ENCODE measurements at regions of chr3 and their contacts with region 1.

Region 1: DNA sequence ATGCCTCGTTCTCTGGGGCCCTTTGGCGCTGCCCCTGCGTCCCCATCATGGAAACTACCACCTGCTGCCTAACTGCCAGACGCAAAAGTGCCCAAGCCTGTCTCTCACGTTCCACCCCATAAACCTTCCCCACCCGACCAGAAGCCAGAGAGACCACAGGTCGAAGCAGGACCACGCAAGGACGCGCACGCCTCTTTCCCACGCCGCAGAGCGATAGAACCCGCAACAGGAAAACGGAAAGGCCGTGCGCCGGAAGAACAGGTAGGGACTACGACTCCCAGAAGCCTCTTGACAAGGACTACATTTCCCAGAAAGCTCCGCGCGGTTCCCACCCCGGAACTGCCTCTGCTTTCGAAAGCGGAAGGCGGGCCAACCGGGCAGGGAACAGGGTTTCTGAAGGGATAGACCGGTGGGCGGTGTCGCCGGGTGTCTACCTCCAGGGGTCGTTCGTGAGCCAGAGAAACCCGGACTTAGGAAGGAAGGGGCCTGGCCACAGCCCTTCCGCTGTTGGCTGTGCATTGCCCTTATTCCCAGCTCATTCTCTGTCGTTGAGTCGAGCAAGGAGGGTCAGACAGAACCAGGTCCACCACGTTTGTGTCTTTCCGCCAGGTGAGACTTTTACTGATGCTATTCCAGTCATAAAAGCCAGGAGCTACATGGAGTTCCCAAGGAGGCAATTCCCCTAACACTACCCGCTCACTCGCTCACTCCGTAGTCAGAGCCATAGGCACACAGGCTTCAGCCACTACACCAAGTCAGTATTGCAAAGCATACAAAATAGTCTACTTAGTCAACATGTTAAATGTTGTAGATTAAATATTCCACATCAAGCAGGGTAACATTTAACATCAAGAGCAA is 56.6 kb upstream of the ZBTB38 start:
- DNase-seq: peak; percentile 99 to 100 (median 99)
- H3K4me3 ChIP-seq: peak overlapping the region; percentile 86 to 97 (median 96)
- H3K27ac ChIP-seq: peak overlapping the region; percentile 65 to 83
- H3K4me1 ChIP-seq: peaks cover 0 to 16% (median 9%) of the 10 kb centered on the region in 3 donors
- H3K27me3 ChIP-seq: no peaks in the 10 kb centered on the region
- CTCF ChIP-seq: peak; percentile 72

Region 2: GRCh38 chr3:141553055-141553454 is 241.3 kb after region 1 on chr3:
- intact Hi-C with region 1: loop called (anchors 10 kb)
- DNase-seq: no peak
- H3K4me3 ChIP-seq: no peak overlapping the region
- H3K27ac ChIP-seq: no peak overlapping the region
- H3K4me1 ChIP-seq: peaks cover 0 to 5% (median 0%) of the 10 kb centered on the region in 3 donors
- H3K27me3 ChIP-seq: no peaks in the 10 kb centered on the region
- CTCF ChIP-seq: no peak

Measured in kidney (tissue), 22 donors.